Panc1 (cell line): ENCODE measurements at regions of chr2 and their contacts with region 1.

Region 1: DNA sequence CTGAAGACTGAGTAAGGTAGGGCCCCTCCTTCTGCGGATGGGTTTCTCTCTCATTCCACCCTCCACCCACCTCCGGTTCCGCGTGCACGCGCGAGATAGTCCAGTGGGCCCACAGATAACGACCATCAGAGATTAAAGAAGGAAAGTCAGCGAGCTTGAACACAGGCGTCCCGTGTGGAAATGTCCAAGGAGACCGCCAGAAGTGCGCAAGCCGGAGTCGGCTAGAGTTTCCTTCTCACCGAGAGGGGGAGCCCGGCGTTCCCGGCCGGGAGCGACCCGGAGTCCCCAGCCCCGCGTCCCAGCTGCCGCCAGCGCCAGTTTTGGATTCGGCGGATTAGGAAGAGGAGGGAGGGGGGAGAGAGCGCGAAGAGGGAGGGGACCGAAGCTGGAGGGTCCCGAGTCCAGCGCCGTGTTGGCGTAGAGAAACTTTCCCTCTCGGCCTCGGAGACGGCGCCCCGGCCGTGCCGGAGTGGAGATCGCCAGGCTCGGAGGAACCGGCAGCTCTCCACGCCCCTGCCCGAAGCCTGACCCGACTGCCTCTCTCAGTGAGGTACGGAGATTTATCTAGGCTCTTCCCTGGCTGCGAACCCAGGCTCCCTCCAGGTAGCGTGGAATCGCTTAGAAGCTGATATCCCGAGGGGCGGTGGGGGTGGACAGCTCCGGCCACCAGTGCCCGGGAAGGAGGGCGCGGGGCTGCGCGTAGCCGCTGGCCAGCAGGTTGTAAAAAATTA is at the start of gene GULP1:
- DNase-seq: no peak
- ATAC-seq: peak; percentile 73
- H3K4me3 ChIP-seq: peak within 1 kb of the TSS; percentile 81 to 82
- H3K27ac ChIP-seq: peak within 1 kb of the TSS; percentile 95
- H3K4me1 ChIP-seq: peaks cover 16% of the 10 kb centered on the region
- H3K27me3 ChIP-seq: no peaks in the 10 kb centered on the region
- CTCF ChIP-seq: peak; percentile 89
- total RNA-seq, gene GULP1: 51.5 TPM

Region 2: GRCh38 chr2:187942876-187943275 is 348.9 kb before region 1 on chr2:
- CTCF ChIA-PET with region 1: no interaction called
- POLR2A ChIA-PET with region 1: interaction called, 10 read pairs
- in situ Hi-C with region 1: no loop called
- intact Hi-C with region 1: no loop called
- DNase-seq: no peak
- ATAC-seq: no peak
- H3K4me3 ChIP-seq: no peak overlapping the region
- H3K27ac ChIP-seq: no peak overlapping the region
- H3K4me1 ChIP-seq: no peaks in the 10 kb centered on the region
- H3K27me3 ChIP-seq: no peaks in the 10 kb centered on the region
- CTCF ChIP-seq: no peak

Region 3: GRCh38 chr2:188256420-188256819 is 35.4 kb before region 1 on chr2:
- CTCF ChIA-PET with region 1: no interaction called
- POLR2A ChIA-PET with region 1: no interaction called
- in situ Hi-C with region 1: no loop called
- intact Hi-C with region 1: no loop called
- DNase-seq: no peak
- ATAC-seq: no peak
- H3K4me3 ChIP-seq: no peak overlapping the region
- H3K27ac ChIP-seq: no peak overlapping the region
- H3K4me1 ChIP-seq: no peaks in the 10 kb centered on the region
- H3K27me3 ChIP-seq: no peaks in the 10 kb centered on the region
- CTCF ChIP-seq: no peak

Region 4: DNA sequence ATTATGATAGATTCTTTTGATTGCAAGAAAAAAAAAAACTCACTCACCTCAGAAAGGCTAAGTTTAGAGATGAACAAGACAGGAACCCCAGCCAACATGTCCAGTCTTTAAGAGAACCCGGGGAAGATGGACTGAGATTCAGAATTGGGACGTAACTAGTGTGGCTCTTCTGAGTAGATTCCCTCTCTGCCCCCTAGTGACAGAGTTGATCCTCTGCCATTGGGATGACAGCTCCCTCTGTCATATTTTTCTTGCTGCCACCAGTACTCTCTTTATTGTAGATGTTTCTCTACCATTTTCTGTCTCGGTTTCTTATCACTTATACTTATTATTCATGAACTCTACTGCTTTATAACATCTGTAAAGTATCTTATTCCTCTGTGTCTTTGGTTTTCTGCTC is 77.6 kb after region 1 on chr2:
- CTCF ChIA-PET with region 1: no interaction called
- POLR2A ChIA-PET with region 1: no interaction called
- in situ Hi-C with region 1: no loop called
- intact Hi-C with region 1: loop called (anchors 5 kb)
- DNase-seq: peak; percentile 35
- ATAC-seq: peak; percentile 92
- H3K4me3 ChIP-seq: no peak overlapping the region
- H3K27ac ChIP-seq: no peak overlapping the region
- H3K4me1 ChIP-seq: peaks cover 10% of the 10 kb centered on the region; the same call in 1 of the 2 replicates
- H3K27me3 ChIP-seq: no peaks in the 10 kb centered on the region
- CTCF ChIP-seq: peak; percentile 84

Region 5: GRCh38 chr2:188512456-188512855 is 220.7 kb after region 1 on chr2:
- CTCF ChIA-PET with region 1: no interaction called
- POLR2A ChIA-PET with region 1: no interaction called
- in situ Hi-C with region 1: no loop called
- intact Hi-C with region 1: loop called (anchors 5 kb)
- DNase-seq: no peak
- ATAC-seq: peak; percentile 72; the same call in 1 of the 2 replicates
- H3K4me3 ChIP-seq: no peak overlapping the region
- H3K27ac ChIP-seq: no peak overlapping the region
- H3K4me1 ChIP-seq: peaks cover 21% of the 10 kb centered on the region; the same call in 1 of the 2 replicates
- H3K27me3 ChIP-seq: no peaks in the 10 kb centered on the region
- CTCF ChIP-seq: peak; percentile 57; the same call in 1 of the 2 replicates